ENCODE measurements at regions of chr1 and their contacts with region 1.

Region 1: DNA sequence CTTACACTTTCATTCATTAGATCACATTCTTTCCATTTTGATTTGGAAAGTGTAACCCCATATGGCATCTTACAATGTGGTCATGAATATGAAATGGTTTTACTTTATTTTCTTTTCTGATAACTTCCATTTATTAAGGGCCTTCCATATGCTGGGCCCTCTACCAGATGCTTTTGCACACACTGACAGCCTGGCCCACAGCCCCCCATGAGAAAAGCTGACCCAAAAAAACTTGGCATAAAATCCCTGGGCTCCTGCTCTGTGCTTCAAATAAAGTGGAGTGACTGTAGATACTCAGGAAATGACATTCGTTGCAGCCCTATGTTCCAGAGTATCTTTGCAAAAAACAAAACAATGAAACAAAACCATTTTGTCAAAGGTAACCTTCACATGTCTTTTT is 48.8 kb downstream of the PRDX6 start:
- DNase-seq: no peak
- H3K4me3 ChIP-seq: no peak overlapping the region
- H3K27ac ChIP-seq: no peak overlapping the region
- H3K4me1 ChIP-seq: peaks cover 3% of the 10 kb centered on the region
- H3K27me3 ChIP-seq: no peaks in the 10 kb centered on the region
- CTCF ChIP-seq: no peak

Region 2: DNA sequence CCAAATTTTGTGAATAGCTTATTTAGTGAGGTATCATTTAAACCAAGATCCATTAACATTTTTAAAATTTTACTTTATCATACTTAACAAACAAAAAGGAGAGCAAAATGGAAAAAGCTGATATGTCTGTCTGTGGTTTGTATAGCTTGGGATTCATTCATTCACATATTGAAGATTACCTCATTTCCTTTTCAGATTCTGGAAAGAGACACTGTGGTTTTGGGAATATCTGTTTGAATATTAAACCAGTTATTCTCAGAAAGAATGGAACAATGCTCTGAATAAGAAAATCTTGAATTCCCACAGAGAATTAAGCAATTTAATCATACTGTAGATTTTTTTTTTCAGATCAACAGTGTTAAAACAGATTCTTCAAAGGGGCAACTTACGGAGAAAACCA is 142.6 kb before region 1 on chr1:
- CTCF ChIA-PET with region 1: no interaction called
- dilution Hi-C with region 1: no loop called
- in situ Hi-C with region 1: no loop called
- intact Hi-C with region 1: no loop called
- DNase-seq: no peak
- H3K4me3 ChIP-seq: no peak overlapping the region
- H3K27ac ChIP-seq: no peak overlapping the region
- H3K4me1 ChIP-seq: no peaks in the 10 kb centered on the region
- H3K27me3 ChIP-seq: no peaks in the 10 kb centered on the region
- CTCF ChIP-seq: no peak

Region 3: GRCh38 chr1:175174309-175175165 is 1648.6 kb after region 1 on chr1:
- CTCF ChIA-PET with region 1: interaction called, 24 read pairs
- dilution Hi-C with region 1: no loop called
- in situ Hi-C with region 1: no loop called
- intact Hi-C with region 1: no loop called
- DNase-seq: no peak
- H3K4me3 ChIP-seq: no peak overlapping the region
- H3K27ac ChIP-seq: no peak overlapping the region
- H3K4me1 ChIP-seq: peaks cover 33% of the 10 kb centered on the region
- H3K27me3 ChIP-seq: no peaks in the 10 kb centered on the region
- CTCF ChIP-seq: no peak